HEK293 (cell line): ENCODE measurements at regions of chr10 and their contacts with region 1.

Region 1: GRCh38 chr10:103350501-103351260 is at the start of gene PCGF6:
- H3K4me3 ChIP-seq: peak within 1 kb of the TSS; percentile 70
- H3K27ac ChIP-seq: peak within 1 kb of the TSS; percentile 90
- H3K4me1 ChIP-seq: no peaks in the 10 kb centered on the region
- CTCF ChIP-seq: peak; percentile 40; the same call in 1 of the 2 replicates

Region 2: GRCh38 chr10:102982267-102982666 is 368.4 kb before region 1 on chr10:
- CTCF ChIA-PET with region 1: no interaction called
- POLR2A ChIA-PET with region 1: no interaction called
- H3K4me3 ChIP-seq: no peak overlapping the region
- H3K27ac ChIP-seq: no peak overlapping the region
- H3K4me1 ChIP-seq: no peaks in the 10 kb centered on the region; the same call in 1 of the 2 replicates
- CTCF ChIP-seq: no peak

Region 3: DNA sequence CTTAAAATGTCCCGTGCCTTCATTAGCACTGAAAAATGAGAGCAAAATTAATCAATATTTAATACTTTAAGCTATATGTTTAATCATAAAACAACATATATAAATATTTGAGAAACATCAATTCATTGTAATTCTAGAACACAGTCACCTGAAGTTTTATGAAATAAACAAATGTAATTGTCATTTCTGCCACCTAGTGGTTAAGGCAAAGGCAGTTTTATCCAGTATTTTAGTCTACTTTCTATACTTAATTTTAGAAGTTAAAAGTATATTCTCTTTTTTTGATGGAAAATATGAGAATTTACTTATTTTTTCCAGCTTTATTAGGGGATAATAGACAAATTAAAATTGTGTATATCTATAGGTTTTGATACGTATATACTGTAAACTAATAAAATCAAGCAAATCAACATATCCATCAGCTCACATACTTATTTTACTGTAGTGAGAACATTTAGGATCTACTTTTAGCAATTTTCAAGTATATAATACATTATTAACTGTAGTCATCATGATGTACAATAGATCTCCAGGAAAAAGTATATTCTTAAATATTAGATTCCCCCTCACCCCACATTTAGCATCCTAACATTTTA is 16.7 kb before region 1 on chr10:
- CTCF ChIA-PET with region 1: interaction called, 15 read pairs
- POLR2A ChIA-PET with region 1: interaction called, 3 read pairs
- H3K4me3 ChIP-seq: no peak overlapping the region
- H3K27ac ChIP-seq: no peak overlapping the region
- H3K4me1 ChIP-seq: no peaks in the 10 kb centered on the region
- CTCF ChIP-seq: no peak

Region 4: DNA sequence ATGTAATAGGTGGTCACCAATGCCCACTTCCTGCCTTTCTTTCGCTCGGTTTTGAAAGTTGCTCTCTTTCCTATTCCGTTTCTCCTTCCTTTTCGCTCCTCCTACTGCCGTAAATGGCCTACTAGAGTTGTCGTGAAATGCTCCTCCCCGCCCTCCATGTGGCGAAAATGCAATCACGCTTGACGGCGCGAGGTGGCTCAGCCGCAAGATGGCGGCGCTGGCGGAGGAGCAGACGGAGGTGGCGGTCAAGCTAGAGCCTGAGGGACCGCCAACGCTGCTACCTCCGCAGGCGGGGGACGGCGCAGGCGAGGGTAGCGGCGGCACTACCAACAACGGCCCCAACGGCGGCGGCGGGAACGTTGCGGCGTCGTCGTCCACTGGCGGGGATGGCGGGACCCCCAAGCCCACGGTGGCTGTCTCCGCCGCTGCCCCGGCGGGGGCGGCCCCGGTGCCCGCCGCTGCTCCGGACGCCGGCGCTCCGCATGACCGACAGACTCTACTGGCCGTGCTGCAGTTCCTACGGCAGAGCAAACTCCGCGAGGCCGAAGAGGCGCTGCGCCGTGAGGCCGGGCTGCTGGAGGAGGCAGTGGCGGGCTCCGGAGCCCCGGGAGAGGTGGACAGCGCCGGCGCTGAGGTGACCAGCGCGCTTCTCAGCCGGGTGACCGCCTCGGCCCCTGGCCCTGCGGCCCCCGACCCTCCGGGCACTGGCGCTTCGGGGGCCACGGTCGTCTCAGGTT is 17.3 kb after region 1 on chr10 and contains the start of gene TAF5:
- CTCF ChIA-PET with region 1: no interaction called
- POLR2A ChIA-PET with region 1: interaction called, 21 read pairs
- H3K4me3 ChIP-seq: peak within 1 kb of the TSS; percentile 98
- H3K27ac ChIP-seq: peak within 1 kb of the TSS; percentile 89
- H3K4me1 ChIP-seq: peaks cover 3% of the 10 kb centered on the region; the same call in 1 of the 2 replicates
- CTCF ChIP-seq: no peak

Region 5: GRCh38 chr10:103472005-103472404 is 121.3 kb after region 1 on chr10:
- CTCF ChIA-PET with region 1: no interaction called
- POLR2A ChIA-PET with region 1: no interaction called
- H3K4me3 ChIP-seq: no peak overlapping the region
- H3K27ac ChIP-seq: no peak overlapping the region
- H3K4me1 ChIP-seq: no peaks in the 10 kb centered on the region
- CTCF ChIP-seq: no peak